ENCODE measurements at regions of chr4 and their contacts with region 1.

Region 1: GRCh38 chr4:182019148-182019652 is 224.0 kb upstream of the TENM3 start:
- DNase-seq: peak; percentile 73
- ATAC-seq: peak; percentile 89
- H3K4me3 ChIP-seq: no peak overlapping the region; the same call in 1 of the 2 replicates
- H3K27ac ChIP-seq: peak overlapping the region; percentile 84
- H3K4me1 ChIP-seq: peaks cover 12% of the 10 kb centered on the region
- H3K27me3 ChIP-seq: no peaks in the 10 kb centered on the region
- CTCF ChIP-seq: no peak
- EP300 ChIP-seq: peak; percentile 78 to 85
- POLR2A ChIP-seq: no peak
- RAD21 ChIP-seq: peak; percentile 19; the same call in 1 of the 2 replicates

Region 2: DNA sequence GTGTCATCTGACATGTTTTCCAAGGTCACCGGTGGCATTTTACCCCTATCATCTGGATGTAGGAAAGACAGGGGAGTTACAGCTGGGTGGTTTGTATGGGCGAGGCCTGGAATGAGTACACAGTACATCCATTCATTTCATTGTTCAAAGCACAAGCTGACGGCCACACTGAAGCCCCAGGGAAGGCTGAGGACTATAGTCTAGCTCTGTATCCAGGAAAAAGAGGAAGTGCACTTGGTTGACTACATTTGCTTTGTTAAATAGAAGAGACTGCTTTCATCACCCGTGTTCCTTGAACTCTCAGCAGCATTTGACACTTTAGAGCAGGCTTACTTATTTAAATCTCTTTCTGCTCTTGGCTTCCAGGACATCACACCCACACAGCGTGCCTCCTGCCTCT is 817.0 kb before region 1 on chr4:
- CTCF ChIA-PET with region 1: no interaction called
- POLR2A ChIA-PET with region 1: no interaction called
- RAD21 ChIA-PET with region 1: no interaction called
- SMC1A ChIA-PET with region 1: no interaction called
- in situ Hi-C with region 1: no loop called
- intact Hi-C with region 1: no loop called
- DNase-seq: no peak
- ATAC-seq: no peak
- H3K4me3 ChIP-seq: no peak overlapping the region
- H3K27ac ChIP-seq: no peak overlapping the region
- H3K4me1 ChIP-seq: no peaks in the 10 kb centered on the region
- H3K27me3 ChIP-seq: no peaks in the 10 kb centered on the region
- CTCF ChIP-seq: no peak
- EP300 ChIP-seq: no peak
- POLR2A ChIP-seq: no peak
- RAD21 ChIP-seq: no peak

Region 3: GRCh38 chr4:181245326-181245725 is 773.9 kb before region 1 on chr4:
- CTCF ChIA-PET with region 1: no interaction called
- POLR2A ChIA-PET with region 1: no interaction called
- RAD21 ChIA-PET with region 1: no interaction called
- SMC1A ChIA-PET with region 1: no interaction called
- in situ Hi-C with region 1: no loop called
- intact Hi-C with region 1: no loop called
- DNase-seq: no peak
- ATAC-seq: no peak
- H3K4me3 ChIP-seq: no peak overlapping the region
- H3K27ac ChIP-seq: no peak overlapping the region
- H3K4me1 ChIP-seq: no peaks in the 10 kb centered on the region
- H3K27me3 ChIP-seq: no peaks in the 10 kb centered on the region
- CTCF ChIP-seq: no peak
- EP300 ChIP-seq: no peak
- POLR2A ChIP-seq: no peak
- RAD21 ChIP-seq: no peak

Region 4: DNA sequence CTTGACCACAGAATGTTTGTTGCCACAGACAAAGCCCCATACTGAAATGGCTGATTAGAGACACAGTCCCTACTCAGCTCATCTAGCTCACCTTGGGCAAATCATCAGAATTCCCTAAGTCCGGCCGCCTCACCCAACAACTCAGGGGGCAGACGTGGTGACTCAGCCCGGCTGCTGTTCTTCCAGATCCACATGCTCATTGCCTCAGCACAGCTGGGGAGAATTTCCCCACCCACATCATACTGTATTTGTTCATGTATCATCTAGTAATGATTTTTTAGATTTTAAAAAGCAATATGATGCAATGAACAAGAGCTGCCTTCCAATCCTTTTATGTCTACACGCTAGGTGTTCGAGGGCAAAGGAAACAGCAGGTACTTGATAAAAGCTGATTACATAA is 109.8 kb before region 1 on chr4:
- CTCF ChIA-PET with region 1: no interaction called
- POLR2A ChIA-PET with region 1: no interaction called
- RAD21 ChIA-PET with region 1: no interaction called
- SMC1A ChIA-PET with region 1: interaction called, 3 read pairs
- in situ Hi-C with region 1: no loop called
- intact Hi-C with region 1: loop called (anchors 5 kb)
- DNase-seq: no peak
- ATAC-seq: no peak
- H3K4me3 ChIP-seq: no peak overlapping the region
- H3K27ac ChIP-seq: no peak overlapping the region
- H3K4me1 ChIP-seq: no peaks in the 10 kb centered on the region
- H3K27me3 ChIP-seq: no peaks in the 10 kb centered on the region
- CTCF ChIP-seq: no peak
- EP300 ChIP-seq: no peak
- POLR2A ChIP-seq: no peak
- RAD21 ChIP-seq: no peak

Region 5: GRCh38 chr4:181971411-181971810 is 47.8 kb before region 1 on chr4:
- CTCF ChIA-PET with region 1: interaction called, 6 read pairs
- POLR2A ChIA-PET with region 1: no interaction called
- RAD21 ChIA-PET with region 1: interaction called, 3 read pairs
- SMC1A ChIA-PET with region 1: interaction called, 4 read pairs
- in situ Hi-C with region 1: no loop called
- intact Hi-C with region 1: loop called (anchors 2 kb)
- DNase-seq: no peak
- ATAC-seq: peak; percentile 87
- H3K4me3 ChIP-seq: no peak overlapping the region
- H3K27ac ChIP-seq: no peak overlapping the region
- H3K4me1 ChIP-seq: no peaks in the 10 kb centered on the region
- H3K27me3 ChIP-seq: no peaks in the 10 kb centered on the region
- CTCF ChIP-seq: no peak
- EP300 ChIP-seq: no peak
- POLR2A ChIP-seq: no peak
- RAD21 ChIP-seq: no peak

Region 6: GRCh38 chr4:182258441-182259031 is 239.3 kb after region 1 on chr4:
- CTCF ChIA-PET with region 1: no interaction called
- POLR2A ChIA-PET with region 1: no interaction called
- RAD21 ChIA-PET with region 1: no interaction called
- SMC1A ChIA-PET with region 1: no interaction called
- in situ Hi-C with region 1: no loop called
- intact Hi-C with region 1: no loop called
- DNase-seq: no peak
- ATAC-seq: no peak
- H3K4me3 ChIP-seq: no peak overlapping the region
- H3K27ac ChIP-seq: no peak overlapping the region
- H3K4me1 ChIP-seq: no peaks in the 10 kb centered on the region
- H3K27me3 ChIP-seq: no peaks in the 10 kb centered on the region
- CTCF ChIP-seq: no peak
- EP300 ChIP-seq: no peak
- POLR2A ChIP-seq: no peak
- RAD21 ChIP-seq: no peak

Region 7: GRCh38 chr4:182917182-182918043 is 898.2 kb after region 1 on chr4 and contains the start of gene DCTD:
- CTCF ChIA-PET with region 1: no interaction called
- POLR2A ChIA-PET with region 1: no interaction called
- RAD21 ChIA-PET with region 1: no interaction called
- SMC1A ChIA-PET with region 1: no interaction called
- in situ Hi-C with region 1: no loop called
- intact Hi-C with region 1: loop called (anchors 5 kb)
- DNase-seq: no peak
- ATAC-seq: peak; percentile 89
- H3K4me3 ChIP-seq: peak within 1 kb of the TSS; percentile 81
- H3K27ac ChIP-seq: peak within 1 kb of the TSS; percentile 99
- H3K4me1 ChIP-seq: peaks cover 19% of the 10 kb centered on the region
- H3K27me3 ChIP-seq: no peaks in the 10 kb centered on the region
- CTCF ChIP-seq: peak; percentile 56 to 62 (median 61)
- EP300 ChIP-seq: peak; percentile 9 to 38; a peak in 2 of 4 replicates
- POLR2A ChIP-seq: peak; percentile 87
- RAD21 ChIP-seq: no peak
- polyA plus RNA-seq, gene DCTD: 37.8 to 58.4 TPM

Measured in GM12878 (cell line).